ENCODE measurements at regions of chr18 and their contacts with region 1.

Region 1: GRCh38 chr18:22983175-22983574 is 50.0 kb downstream of the RBBP8 start:
- DNase-seq: no peak
- ATAC-seq: no peak
- H3K4me3 ChIP-seq: no peak overlapping the region
- H3K27ac ChIP-seq: no peak overlapping the region
- H3K4me1 ChIP-seq: no peaks in the 10 kb centered on the region
- H3K27me3 ChIP-seq: no peaks in the 10 kb centered on the region
- CTCF ChIP-seq: peak in 6 of 7 experiments; percentile 41 to 76 (median 68)
- POLR2A ChIP-seq: no peak

Region 2: DNA sequence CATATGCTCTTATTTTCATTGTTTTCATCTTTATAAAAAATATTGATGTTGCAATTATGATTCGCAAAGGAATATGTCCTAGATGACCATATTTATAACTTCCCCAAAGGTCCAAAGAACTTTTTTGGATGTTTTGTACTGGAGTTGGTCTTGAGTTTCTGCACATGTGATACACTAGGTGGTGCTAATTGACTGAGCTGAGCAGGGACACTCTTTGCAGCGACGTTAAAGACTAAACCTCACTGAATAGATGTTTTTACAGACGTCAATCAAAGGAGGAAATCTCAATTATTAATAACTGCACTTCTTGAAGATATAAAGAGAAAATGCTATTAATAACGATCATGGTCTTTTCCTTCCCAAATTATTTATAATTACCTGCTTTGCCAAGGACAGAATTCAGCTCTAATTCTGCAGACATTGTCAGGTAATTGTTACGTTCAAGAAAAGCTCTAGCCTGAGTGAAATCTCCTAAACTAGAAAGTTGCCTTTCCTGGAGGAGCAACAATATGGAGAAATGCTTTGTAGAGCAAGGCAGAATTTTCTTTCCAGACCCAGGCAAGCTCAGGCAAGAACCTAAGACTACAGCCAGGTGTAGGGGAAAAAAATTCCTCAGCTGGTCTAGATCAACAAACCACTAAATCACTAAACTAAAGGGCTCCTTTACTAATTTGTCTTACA is 169.4 kb before region 1 on chr18:
- intact Hi-C with region 1: loop called (anchors 10 kb)
- DNase-seq: peak in 3 of 4 donors; percentile 16 to 26 (median 21)
- ATAC-seq: peak; percentile 33
- H3K4me3 ChIP-seq: no peak overlapping the region
- H3K27ac ChIP-seq: no peak overlapping the region
- H3K4me1 ChIP-seq: no peaks in the 10 kb centered on the region
- H3K27me3 ChIP-seq: no peaks in the 10 kb centered on the region
- CTCF ChIP-seq: peak; percentile 27 to 75 (median 68)
- POLR2A ChIP-seq: no peak

Region 3: GRCh38 chr18:22846088-22846683 is 137.0 kb before region 1 on chr18:
- intact Hi-C with region 1: loop called (anchors 10 kb)
- DNase-seq: peak in 1 of 4 donors; percentile 37
- ATAC-seq: peak; percentile 55
- H3K4me3 ChIP-seq: no peak overlapping the region
- H3K27ac ChIP-seq: no peak overlapping the region
- H3K4me1 ChIP-seq: peaks cover 23% of the 10 kb centered on the region
- H3K27me3 ChIP-seq: no peaks in the 10 kb centered on the region
- CTCF ChIP-seq: peak; percentile 19 to 73 (median 62)
- POLR2A ChIP-seq: no peak

Region 4: DNA sequence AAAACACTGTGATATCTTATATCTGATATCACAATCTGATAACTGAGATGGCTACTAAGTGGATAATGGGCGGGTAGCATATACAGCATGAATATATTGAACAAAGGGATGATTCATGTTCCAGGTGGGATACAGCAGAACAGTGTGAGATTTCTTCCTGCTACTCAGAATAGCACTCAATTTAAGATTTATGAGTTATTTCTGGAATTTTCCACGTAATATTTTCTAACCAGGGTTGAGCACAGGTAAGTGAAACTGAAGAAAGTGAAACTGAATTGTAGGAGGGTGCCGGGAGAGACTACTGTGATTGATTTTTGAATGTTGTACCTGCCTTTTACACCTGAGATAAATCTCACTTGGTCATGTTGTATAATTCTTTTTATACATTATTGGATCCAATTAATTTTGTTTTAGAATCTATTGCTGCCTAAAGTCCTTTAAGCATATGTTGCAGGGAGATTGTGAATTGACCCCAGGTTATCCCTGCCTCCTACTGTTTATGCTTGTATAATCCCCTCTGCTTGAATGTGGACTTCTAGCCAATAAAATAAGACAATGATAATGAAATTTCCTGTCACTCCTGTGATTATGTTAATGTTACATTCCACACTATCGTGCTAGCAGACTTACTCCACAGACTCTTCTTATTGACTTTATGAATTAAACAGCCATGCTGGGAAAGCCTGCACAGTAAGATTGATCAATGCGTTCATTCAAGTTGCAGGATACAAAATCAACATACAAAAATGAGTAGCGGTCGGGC is 117.6 kb before region 1 on chr18:
- intact Hi-C with region 1: no loop called
- DNase-seq: peak in 1 of 4 donors; percentile 19
- ATAC-seq: peak; percentile 89
- H3K4me3 ChIP-seq: peak overlapping the region in 1 of 2 donors; percentile 12
- H3K27ac ChIP-seq: peak overlapping the region; percentile 34 to 74 (median 69)
- H3K4me1 ChIP-seq: peaks cover 8% of the 10 kb centered on the region
- H3K27me3 ChIP-seq: no peaks in the 10 kb centered on the region
- CTCF ChIP-seq: peak in 2 of 7 experiments; percentile 18 to 22
- POLR2A ChIP-seq: no peak

Region 5: DNA sequence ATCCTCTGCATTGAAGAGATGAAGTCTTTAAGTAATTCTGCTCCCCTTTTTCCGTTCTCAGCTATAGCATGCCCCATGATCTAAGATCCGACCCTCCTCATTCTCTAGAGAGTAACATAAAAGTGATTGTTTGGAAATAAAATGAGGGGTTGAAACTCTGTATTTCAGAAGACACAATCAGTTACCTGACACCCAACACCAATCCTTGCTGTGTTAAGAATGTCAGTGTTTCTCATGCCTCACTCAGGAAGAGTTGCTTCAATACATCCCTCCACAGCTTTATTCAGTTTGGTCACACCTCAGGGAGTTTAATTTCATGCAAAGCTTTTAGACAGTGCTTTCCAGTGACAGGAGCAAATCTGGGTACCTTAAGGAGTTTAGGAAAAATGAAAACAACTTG is 100.0 kb before region 1 on chr18:
- intact Hi-C with region 1: no loop called
- DNase-seq: no peak
- ATAC-seq: no peak
- H3K4me3 ChIP-seq: no peak overlapping the region
- H3K27ac ChIP-seq: peak overlapping the region in 3 of 4 donors; percentile 20 to 51 (median 32)
- H3K4me1 ChIP-seq: peaks cover 17% of the 10 kb centered on the region
- H3K27me3 ChIP-seq: no peaks in the 10 kb centered on the region
- CTCF ChIP-seq: no peak
- POLR2A ChIP-seq: no peak